CD8-positive, alpha-beta T cell (primary cell): ENCODE measurements at regions of chr16 and their contacts with region 1.

Region 1: DNA sequence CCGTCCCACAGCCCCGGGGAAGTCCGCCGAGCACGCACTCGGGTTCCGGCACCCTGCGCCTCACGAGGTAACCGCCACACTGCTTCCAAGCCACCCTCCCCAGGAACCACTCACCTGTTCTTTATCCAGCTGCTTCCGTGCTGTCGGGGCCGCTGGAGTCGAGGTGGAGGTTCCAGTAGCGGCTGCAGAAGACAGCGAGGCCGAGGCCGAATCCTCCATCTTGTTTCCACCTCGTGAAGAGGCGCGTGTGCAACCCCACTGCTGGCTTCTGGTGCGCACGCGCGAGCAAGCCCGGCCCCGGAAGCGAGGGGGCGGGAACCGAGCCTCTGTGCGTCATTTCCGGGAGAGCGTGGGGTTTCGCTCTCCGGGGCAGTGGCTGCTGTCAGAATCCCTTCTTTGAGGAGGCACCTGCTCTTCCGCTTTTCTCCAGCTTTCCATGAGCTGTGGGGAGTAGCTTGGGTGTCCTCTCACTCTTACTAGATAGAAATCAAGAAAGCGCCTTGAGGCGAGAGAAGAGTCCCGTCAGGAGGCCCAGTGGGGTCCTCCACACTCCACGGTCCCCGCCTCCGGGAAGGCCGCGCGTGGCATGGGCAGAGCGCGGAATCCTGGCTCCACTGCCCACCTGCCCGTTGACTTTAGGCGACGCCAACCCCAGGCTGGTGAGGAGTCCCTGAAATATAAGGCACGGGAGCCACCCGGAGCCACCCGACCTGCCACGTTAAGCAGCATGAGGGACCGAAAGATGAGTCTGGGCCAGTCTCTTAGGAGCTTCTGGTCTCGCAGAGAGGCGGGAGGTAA is at the start of gene RSL1D1:
- DNase-seq: peak; percentile 89 to 98 (median 93)
- ATAC-seq: peak; percentile 79
- H3K4me3 ChIP-seq: peak within 1 kb of the TSS; percentile 99
- H3K4me3 Mint-ChIP-seq: peak within 1 kb of the TSS; percentile 93
- H3K27ac ChIP-seq: peak within 1 kb of the TSS; percentile 92 to 95
- H3K27ac Mint-ChIP-seq: peak within 1 kb of the TSS; percentile 96
- H3K4me1 ChIP-seq: peaks cover 48% of the 10 kb centered on the region
- H3K4me1 Mint-ChIP-seq: peaks cover 57% of the 10 kb centered on the region
- H3K27me3 ChIP-seq: no peaks in the 10 kb centered on the region
- H3K27me3 Mint-ChIP-seq: no peaks in the 10 kb centered on the region
- CTCF ChIP-seq: no peak
- total RNA-seq, gene RSL1D1: 235 to 242 TPM

Region 2: DNA sequence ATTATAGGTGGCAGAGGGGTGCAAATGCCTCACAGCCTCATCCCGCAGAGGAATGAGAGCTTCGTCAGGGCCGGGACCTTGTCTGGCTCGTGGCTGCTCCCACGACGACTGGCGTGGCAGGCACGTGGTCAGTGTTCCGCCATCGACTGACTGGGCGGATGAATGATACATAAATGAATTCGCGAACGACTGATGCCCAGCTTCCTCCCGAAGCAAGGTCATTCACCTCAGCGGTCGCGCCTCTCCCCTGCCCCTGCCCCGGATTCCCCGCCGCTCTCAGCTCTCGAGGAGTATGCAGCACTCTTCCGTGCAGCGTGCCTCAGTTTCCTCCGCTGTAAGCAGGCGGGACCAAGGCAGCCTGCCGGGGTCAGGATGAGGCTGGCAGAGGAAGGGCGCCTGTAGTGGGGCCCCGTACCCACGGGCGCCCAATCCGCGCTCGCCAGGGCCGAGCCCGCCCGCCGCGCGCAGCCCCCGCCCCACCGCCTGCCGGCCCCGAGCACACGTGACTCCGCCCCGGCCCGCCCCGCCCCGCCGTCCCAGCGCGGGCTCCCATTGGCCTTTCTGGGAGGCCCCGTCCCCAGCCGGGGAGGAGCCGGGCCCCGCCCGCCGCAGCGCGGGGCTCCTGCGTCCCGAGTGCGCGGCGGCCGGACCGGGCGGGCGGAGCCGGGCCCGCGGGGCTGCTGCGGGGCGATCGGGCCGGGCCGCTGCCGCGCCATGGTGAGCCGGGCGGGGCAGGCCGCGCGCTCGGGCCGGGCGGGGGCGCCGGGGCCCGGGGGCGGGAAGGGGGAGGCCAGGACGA is 183.5 kb before region 1 on chr16 and contains the start of gene SNN:
- CTCF ChIA-PET with region 1: no interaction called
- POLR2A ChIA-PET with region 1: no interaction called
- intact Hi-C with region 1: loop called in 1 of 2 experiments (anchors 1 kb)
- DNase-seq: peak; percentile 69 to 91 (median 83)
- ATAC-seq: peak; percentile 81
- H3K4me3 ChIP-seq: peak within 1 kb of the TSS; percentile 51 to 59
- H3K4me3 Mint-ChIP-seq: peak within 1 kb of the TSS; percentile 85
- H3K27ac ChIP-seq: peak within 1 kb of the TSS; percentile 62 to 70
- H3K27ac Mint-ChIP-seq: peak within 1 kb of the TSS; percentile 97
- H3K4me1 ChIP-seq: peaks cover 86% of the 10 kb centered on the region
- H3K4me1 Mint-ChIP-seq: peaks cover 78% of the 10 kb centered on the region
- H3K27me3 ChIP-seq: no peaks in the 10 kb centered on the region
- H3K27me3 Mint-ChIP-seq: no peaks in the 10 kb centered on the region
- CTCF ChIP-seq: no peak
- total RNA-seq, gene SNN: 105 to 107 TPM

Region 3: GRCh38 chr16:11783319-11784037 is 68.0 kb before region 1 on chr16:
- CTCF ChIA-PET with region 1: no interaction called
- POLR2A ChIA-PET with region 1: no interaction called
- intact Hi-C with region 1: loop called in 1 of 2 experiments (anchors 5 kb)
- DNase-seq: peak in 6 of 9 experiments; percentile 17 to 93 (median 54)
- ATAC-seq: peak; percentile 81
- H3K4me3 ChIP-seq: peak overlapping the region; percentile 32 to 36
- H3K4me3 Mint-ChIP-seq: peak overlapping the region; percentile 78
- H3K27ac ChIP-seq: peak overlapping the region; percentile 82 to 96
- H3K27ac Mint-ChIP-seq: peak overlapping the region; percentile 99
- H3K4me1 ChIP-seq: peaks cover 51% of the 10 kb centered on the region
- H3K4me1 Mint-ChIP-seq: peaks cover 57% of the 10 kb centered on the region
- H3K27me3 ChIP-seq: no peaks in the 10 kb centered on the region
- H3K27me3 Mint-ChIP-seq: no peaks in the 10 kb centered on the region
- CTCF ChIP-seq: no peak

Region 4: DNA sequence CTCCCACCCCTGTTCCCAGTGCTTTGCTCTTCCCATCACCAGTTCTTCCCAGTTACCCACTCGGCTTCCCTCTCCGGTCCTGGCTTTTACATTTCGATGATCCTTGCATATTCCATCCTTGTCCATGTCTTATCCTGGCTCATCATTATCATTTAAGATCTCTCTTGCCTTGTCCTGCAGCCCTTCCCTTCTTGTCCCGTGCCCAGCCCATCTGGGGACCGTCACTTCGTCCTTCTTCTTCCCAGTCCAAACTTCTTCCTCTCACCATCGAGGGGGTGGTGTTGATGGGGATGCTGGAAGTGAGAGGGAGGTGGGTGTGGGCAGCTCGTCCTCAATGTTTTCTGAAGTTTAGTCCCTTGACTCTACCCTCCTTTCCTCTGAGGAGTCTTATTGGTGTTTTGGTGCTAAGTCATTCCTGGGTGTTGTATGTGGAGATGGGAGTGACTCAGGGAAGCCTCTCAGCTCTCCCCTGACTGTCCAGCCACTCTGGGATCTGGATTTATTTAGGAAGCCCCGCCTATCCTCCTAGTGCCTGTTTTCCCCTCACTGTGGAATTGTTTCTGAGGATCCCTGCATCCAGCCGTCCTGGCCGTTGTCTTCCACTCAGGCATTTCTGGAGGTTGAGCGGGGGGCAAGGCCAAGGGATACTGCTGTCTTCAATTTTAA is 126.0 kb after region 1 on chr16:
- CTCF ChIA-PET with region 1: no interaction called
- POLR2A ChIA-PET with region 1: no interaction called
- intact Hi-C with region 1: loop called (anchors 1 to 2 kb)
- DNase-seq: no peak
- ATAC-seq: no peak
- H3K4me3 ChIP-seq: peak overlapping the region; percentile 65 to 81
- H3K4me3 Mint-ChIP-seq: peak overlapping the region; percentile 91
- H3K27ac ChIP-seq: no peak overlapping the region
- H3K27ac Mint-ChIP-seq: peak overlapping the region; percentile 89
- H3K4me1 ChIP-seq: peaks cover 16% of the 10 kb centered on the region
- H3K4me1 Mint-ChIP-seq: peaks cover 42% of the 10 kb centered on the region
- H3K27me3 ChIP-seq: no peaks in the 10 kb centered on the region
- H3K27me3 Mint-ChIP-seq: no peaks in the 10 kb centered on the region
- CTCF ChIP-seq: no peak